Sciatic nerve (tissue), 2 donors: ENCODE measurements at regions of chr4 and their contacts with region 1.

Region 1: GRCh38 chr4:53037892-53038291 is 175.8 kb downstream of the RASL11B start:
- DNase-seq: no peak
- ATAC-seq: no peak

Region 2: DNA sequence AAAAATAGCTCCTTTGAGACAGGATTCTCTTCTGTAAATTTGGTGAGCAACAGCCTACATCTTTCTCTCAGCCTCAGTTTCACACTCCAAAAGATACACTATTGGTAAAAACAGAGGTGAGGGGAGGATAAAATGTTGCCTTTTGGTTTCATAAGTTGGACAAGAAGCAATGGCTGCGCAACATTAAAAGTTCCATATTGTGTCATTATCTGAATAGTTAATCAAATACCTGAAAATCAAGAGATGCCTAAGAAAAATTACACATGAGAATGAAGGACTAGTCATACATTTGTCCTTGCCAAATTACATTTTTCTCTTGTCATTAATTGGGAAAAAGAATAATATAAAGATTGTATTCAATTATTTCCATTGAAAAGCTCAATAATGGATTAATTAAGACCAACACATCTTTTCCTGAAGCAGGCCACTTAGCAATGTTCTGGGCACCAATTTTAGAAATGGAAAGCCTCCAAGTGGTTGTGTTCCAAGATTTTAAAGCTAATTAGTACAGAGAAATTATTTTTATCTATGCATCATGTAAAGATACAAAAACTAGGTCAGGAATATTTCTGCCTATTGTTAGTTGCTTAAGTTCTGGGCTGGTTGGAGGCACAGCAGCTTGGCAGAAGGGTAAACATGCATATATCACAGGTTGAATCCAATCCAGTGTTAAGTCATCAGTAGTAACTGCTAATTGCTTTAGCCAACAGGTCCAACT is 74.0 kb before region 1 on chr4:
- intact Hi-C with region 1: loop called (anchors 2 kb)
- DNase-seq: no peak
- ATAC-seq: no peak